ENCODE measurements at regions of chr12 and their contacts with region 1.

Region 1: GRCh38 chr12:47742253-47742825 is 16.3 kb downstream of the RAPGEF3 start:
- DNase-seq: peak; percentile 58 to 67 (median 61)
- H3K4me3 ChIP-seq: no peak overlapping the region
- H3K4me3 Mint-ChIP-seq: peak overlapping the region in 2 of 8 donors; percentile 24 to 59
- H3K27ac ChIP-seq: no peak overlapping the region
- H3K27ac Mint-ChIP-seq: peak overlapping the region in 6 of 7 donors; percentile 20 to 72 (median 36)
- H3K4me1 ChIP-seq: peaks cover 29% of the 10 kb centered on the region
- H3K4me1 Mint-ChIP-seq: peaks cover 19 to 55% (median 40%) of the 10 kb centered on the region in 4 donors
- H3K27me3 ChIP-seq: no peaks in the 10 kb centered on the region
- H3K27me3 Mint-ChIP-seq: peaks cover 0 to 3% of the 10 kb centered on the region in 2 donors

Region 2: DNA sequence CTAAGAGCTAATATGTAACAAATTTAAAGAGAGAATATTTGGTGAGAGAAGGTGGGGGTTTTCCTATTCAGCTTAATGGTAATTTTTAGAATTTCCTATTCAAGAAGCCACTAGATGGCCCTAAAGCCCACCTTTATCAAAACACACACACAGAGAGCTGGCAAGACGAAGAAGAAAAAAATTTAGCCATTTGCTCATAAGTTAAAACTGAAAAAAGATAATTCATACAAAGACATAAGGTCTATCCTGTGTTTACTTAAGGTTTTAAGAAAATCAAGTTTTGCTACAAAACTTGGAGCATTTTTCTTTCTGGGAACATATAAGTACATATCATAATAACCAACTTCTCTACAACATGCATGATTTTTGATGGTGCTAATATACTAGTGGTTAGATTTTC is 709.7 kb before region 1 on chr12:
- CTCF ChIA-PET with region 1: interaction called, 11 read pairs
- POLR2A ChIA-PET with region 1: no interaction called
- intact Hi-C with region 1: no loop called
- DNase-seq: peak; percentile 33 to 65 (median 56)
- H3K4me3 ChIP-seq: no peak overlapping the region
- H3K4me3 Mint-ChIP-seq: no peak overlapping the region
- H3K27ac ChIP-seq: no peak overlapping the region
- H3K27ac Mint-ChIP-seq: peak overlapping the region in 1 of 7 donors; percentile 1
- H3K4me1 ChIP-seq: peaks cover 10% of the 10 kb centered on the region
- H3K4me1 Mint-ChIP-seq: peaks cover 8 to 16% (median 10%) of the 10 kb centered on the region in 4 donors
- H3K27me3 ChIP-seq: no peaks in the 10 kb centered on the region
- H3K27me3 Mint-ChIP-seq: no peaks in the 10 kb centered on the region

Region 3: GRCh38 chr12:47715393-47715876 is 26.9 kb before region 1 on chr12:
- CTCF ChIA-PET with region 1: interaction called, 125 read pairs
- POLR2A ChIA-PET with region 1: interaction called, 4 read pairs
- intact Hi-C with region 1: loop called (anchors 1 kb)
- DNase-seq: peak; percentile 74 to 81 (median 78)
- H3K4me3 ChIP-seq: no peak overlapping the region
- H3K4me3 Mint-ChIP-seq: no peak overlapping the region
- H3K27ac ChIP-seq: no peak overlapping the region
- H3K27ac Mint-ChIP-seq: peak overlapping the region in 5 of 7 donors; percentile 24 to 77 (median 65)
- H3K4me1 ChIP-seq: peaks cover 18% of the 10 kb centered on the region
- H3K4me1 Mint-ChIP-seq: peaks cover 11 to 24% (median 20%) of the 10 kb centered on the region in 4 donors
- H3K27me3 ChIP-seq: no peaks in the 10 kb centered on the region
- H3K27me3 Mint-ChIP-seq: no peaks in the 10 kb centered on the region

Region 4: GRCh38 chr12:47767216-47767724 is 24.9 kb after region 1 on chr12:
- CTCF ChIA-PET with region 1: interaction called, 671 read pairs
- POLR2A ChIA-PET with region 1: interaction called, 20 read pairs
- intact Hi-C with region 1: loop called (anchors 1 kb)
- DNase-seq: peak; percentile 61 to 72 (median 67)
- H3K4me3 ChIP-seq: no peak overlapping the region
- H3K4me3 Mint-ChIP-seq: no peak overlapping the region
- H3K27ac ChIP-seq: no peak overlapping the region
- H3K27ac Mint-ChIP-seq: peak overlapping the region in 1 of 7 donors; percentile 7
- H3K4me1 ChIP-seq: peaks cover under 1% of the 10 kb centered on the region
- H3K4me1 Mint-ChIP-seq: peaks cover 4 to 14% (median 6%) of the 10 kb centered on the region in 4 donors
- H3K27me3 ChIP-seq: no peaks in the 10 kb centered on the region
- H3K27me3 Mint-ChIP-seq: no peaks in the 10 kb centered on the region

Region 5: GRCh38 chr12:47785036-47785886 is 42.9 kb after region 1 on chr12:
- CTCF ChIA-PET with region 1: interaction called, 671 read pairs
- POLR2A ChIA-PET with region 1: no interaction called
- intact Hi-C with region 1: no loop called
- DNase-seq: no peak
- H3K4me3 ChIP-seq: no peak overlapping the region
- H3K4me3 Mint-ChIP-seq: no peak overlapping the region
- H3K27ac ChIP-seq: no peak overlapping the region
- H3K27ac Mint-ChIP-seq: peak overlapping the region in 5 of 7 donors; percentile 24 to 72 (median 62)
- H3K4me1 ChIP-seq: no peaks in the 10 kb centered on the region
- H3K4me1 Mint-ChIP-seq: peaks cover 4 to 7% (median 5%) of the 10 kb centered on the region in 4 donors
- H3K27me3 ChIP-seq: no peaks in the 10 kb centered on the region
- H3K27me3 Mint-ChIP-seq: no peaks in the 10 kb centered on the region

Region 6: GRCh38 chr12:47812797-47813510 is 70.6 kb after region 1 on chr12:
- CTCF ChIA-PET with region 1: interaction called, 67 read pairs
- POLR2A ChIA-PET with region 1: interaction called, 8 read pairs
- intact Hi-C with region 1: no loop called
- DNase-seq: peak; percentile 79 to 97 (median 85)
- H3K4me3 ChIP-seq: peak overlapping the region; percentile 57 to 80
- H3K4me3 Mint-ChIP-seq: peak overlapping the region; percentile 82 to 92 (median 86)
- H3K27ac ChIP-seq: peak overlapping the region; percentile 91
- H3K27ac Mint-ChIP-seq: peak overlapping the region; percentile 93 to 99 (median 97)
- H3K4me1 ChIP-seq: peaks cover 97% of the 10 kb centered on the region
- H3K4me1 Mint-ChIP-seq: peaks cover 73 to 100% (median 88%) of the 10 kb centered on the region in 4 donors
- H3K27me3 ChIP-seq: no peaks in the 10 kb centered on the region
- H3K27me3 Mint-ChIP-seq: no peaks in the 10 kb centered on the region

Region 7: DNA sequence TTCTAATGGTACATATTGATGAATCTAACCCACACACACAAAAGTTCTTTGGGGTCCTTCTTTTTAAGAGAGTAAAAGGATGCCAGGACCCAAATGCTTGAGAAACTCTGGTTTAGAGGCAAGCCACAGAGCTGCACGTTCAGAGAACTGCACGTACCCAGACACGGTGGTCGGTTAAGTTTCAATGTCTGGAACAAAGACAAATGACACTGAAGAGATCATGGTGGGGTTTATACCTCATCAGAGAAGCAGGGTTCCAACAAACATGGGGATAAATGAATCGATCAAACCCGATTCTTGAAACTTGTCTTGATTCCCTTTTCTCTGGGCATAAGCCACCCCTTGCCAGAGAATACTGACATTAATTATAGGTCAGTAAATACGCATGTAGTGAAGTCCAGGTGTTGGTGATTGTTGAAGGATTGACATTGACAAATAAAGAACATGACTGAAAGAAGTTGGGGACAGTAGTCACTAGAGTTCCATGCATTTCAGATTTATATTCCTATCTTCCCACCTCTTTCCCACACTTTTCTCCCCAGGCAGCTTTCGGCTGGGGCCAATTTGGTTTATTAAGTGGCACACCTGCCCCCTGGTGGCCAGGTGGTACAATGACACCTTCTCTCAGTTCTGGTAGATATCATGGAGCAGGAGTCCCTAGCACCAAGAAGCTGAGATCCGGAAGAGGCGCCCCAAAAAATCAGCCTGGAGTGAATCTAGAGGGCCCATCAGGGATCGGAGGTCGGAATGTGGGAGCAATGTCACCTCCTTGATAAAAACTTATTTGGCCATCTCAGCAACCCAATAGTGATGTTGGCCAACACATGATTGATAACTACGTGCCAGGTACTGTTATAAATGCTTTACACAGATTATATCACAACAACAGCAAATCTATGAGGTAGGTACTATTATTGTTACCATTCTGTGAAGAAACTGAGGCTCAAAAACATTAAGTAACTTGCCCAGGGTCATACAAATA is 95.1 kb after region 1 on chr12:
- CTCF ChIA-PET with region 1: interaction called, 533 read pairs
- POLR2A ChIA-PET with region 1: interaction called, 29 read pairs
- intact Hi-C with region 1: loop called (anchors 1 kb)
- DNase-seq: peak; percentile 50 to 73 (median 64)
- H3K4me3 ChIP-seq: no peak overlapping the region
- H3K4me3 Mint-ChIP-seq: no peak overlapping the region
- H3K27ac ChIP-seq: no peak overlapping the region
- H3K27ac Mint-ChIP-seq: peak overlapping the region in 6 of 7 donors; percentile 10 to 93 (median 40)
- H3K4me1 ChIP-seq: peaks cover 47% of the 10 kb centered on the region
- H3K4me1 Mint-ChIP-seq: peaks cover 31 to 53% (median 42%) of the 10 kb centered on the region in 4 donors
- H3K27me3 ChIP-seq: no peaks in the 10 kb centered on the region
- H3K27me3 Mint-ChIP-seq: no peaks in the 10 kb centered on the region

Region 8: GRCh38 chr12:48061948-48062719 is 319.8 kb after region 1 on chr12:
- CTCF ChIA-PET with region 1: no interaction called
- POLR2A ChIA-PET with region 1: no interaction called
- intact Hi-C with region 1: no loop called
- DNase-seq: no peak
- H3K4me3 ChIP-seq: no peak overlapping the region
- H3K4me3 Mint-ChIP-seq: no peak overlapping the region
- H3K27ac ChIP-seq: no peak overlapping the region
- H3K27ac Mint-ChIP-seq: no peak overlapping the region
- H3K4me1 ChIP-seq: no peaks in the 10 kb centered on the region
- H3K4me1 Mint-ChIP-seq: no peaks in the 10 kb centered on the region
- H3K27me3 ChIP-seq: no peaks in the 10 kb centered on the region
- H3K27me3 Mint-ChIP-seq: no peaks in the 10 kb centered on the region

Region 9: DNA sequence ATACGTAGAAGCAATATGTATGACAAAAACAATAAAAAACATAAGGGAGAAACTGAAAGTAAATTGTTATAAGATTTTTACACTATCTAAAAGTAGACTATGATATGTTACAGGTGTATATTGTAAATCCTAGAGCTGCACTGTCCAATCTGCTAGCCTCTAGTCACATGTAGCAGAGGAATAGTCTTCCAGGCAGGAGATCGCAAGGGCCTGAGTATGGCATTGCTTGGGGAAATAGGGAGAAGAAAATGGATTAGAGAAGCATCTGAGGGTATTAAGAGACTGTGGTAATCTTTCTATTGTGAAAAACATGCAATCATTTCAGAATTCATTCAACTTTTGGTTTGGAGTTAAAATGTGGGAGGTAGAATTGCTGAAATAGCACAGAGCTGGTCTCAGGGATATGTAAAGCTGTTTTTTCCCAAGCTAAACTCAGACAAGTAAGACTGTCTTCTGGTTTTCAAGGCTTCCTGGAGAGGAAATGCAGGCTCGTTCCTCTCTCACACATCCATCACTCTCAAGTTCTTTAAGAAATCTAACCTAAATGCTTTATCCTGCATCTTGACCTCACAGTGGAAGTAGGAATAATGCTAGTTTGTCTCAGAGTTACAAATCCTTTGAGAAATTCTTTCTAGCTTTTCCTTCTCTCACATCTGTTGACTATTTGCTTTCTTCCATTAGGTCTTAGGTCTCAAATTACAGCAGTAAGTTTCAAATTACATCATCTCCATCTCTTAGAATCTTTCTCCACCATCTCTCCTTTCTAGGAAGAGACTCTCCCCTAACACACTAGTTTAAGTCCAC is 433.5 kb after region 1 on chr12:
- CTCF ChIA-PET with region 1: no interaction called
- POLR2A ChIA-PET with region 1: no interaction called
- intact Hi-C with region 1: no loop called
- DNase-seq: no peak
- H3K4me3 ChIP-seq: no peak overlapping the region
- H3K4me3 Mint-ChIP-seq: peak overlapping the region in 4 of 8 donors; percentile 14 to 66 (median 47)
- H3K27ac ChIP-seq: no peak overlapping the region
- H3K27ac Mint-ChIP-seq: peak overlapping the region in 3 of 7 donors; percentile 30 to 84 (median 69)
- H3K4me1 ChIP-seq: no peaks in the 10 kb centered on the region
- H3K4me1 Mint-ChIP-seq: peaks cover 3 to 8% (median 4%) of the 10 kb centered on the region in 4 donors
- H3K27me3 ChIP-seq: no peaks in the 10 kb centered on the region
- H3K27me3 Mint-ChIP-seq: peaks cover 5 to 17% of the 10 kb centered on the region in 2 donors